Psoas muscle (tissue), 8 donors: ENCODE measurements at regions of chr2 and their contacts with region 1.

Region 1: DNA sequence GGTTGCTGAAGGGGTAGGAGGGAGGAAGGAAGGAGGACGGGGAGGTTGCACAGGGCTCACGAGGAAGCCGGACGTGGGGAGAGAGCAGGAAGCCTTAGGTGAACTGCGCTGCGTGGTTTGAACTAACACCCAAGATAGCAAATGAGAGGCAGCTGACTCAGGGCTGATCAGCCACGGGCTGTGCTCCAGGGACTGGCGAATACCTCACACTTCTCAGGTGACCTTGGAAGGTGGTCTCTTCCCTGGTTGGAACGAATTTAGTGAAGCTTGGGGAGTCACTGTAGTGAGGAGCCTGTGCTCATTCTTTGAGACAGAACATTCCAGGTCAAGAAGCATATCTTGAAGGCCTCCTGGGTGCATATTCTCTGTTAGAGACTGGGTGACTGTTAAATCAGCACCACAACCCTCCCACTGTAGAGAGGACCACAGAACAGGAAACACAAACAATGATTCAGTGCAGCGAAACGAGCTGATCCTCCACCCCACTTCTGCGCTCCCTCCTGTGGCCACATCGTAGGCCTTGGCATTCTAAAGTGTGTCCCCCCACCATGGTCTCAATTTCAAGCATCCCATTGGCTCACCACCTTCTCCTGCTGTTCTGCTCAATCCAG is 33.8 kb downstream of the TOGARAM2 start:
- DNase-seq: peak; percentile 66 to 86
- ATAC-seq: peak in 3 of 4 donors; percentile 27 to 36 (median 34)
- H3K4me3 ChIP-seq: peak overlapping the region; percentile 52
- H3K27ac ChIP-seq: peak overlapping the region; percentile 87
- H3K4me1 ChIP-seq: peaks cover 66% of the 10 kb centered on the region
- H3K27me3 ChIP-seq: no peaks in the 10 kb centered on the region
- CTCF ChIP-seq: no peak

Region 2: DNA sequence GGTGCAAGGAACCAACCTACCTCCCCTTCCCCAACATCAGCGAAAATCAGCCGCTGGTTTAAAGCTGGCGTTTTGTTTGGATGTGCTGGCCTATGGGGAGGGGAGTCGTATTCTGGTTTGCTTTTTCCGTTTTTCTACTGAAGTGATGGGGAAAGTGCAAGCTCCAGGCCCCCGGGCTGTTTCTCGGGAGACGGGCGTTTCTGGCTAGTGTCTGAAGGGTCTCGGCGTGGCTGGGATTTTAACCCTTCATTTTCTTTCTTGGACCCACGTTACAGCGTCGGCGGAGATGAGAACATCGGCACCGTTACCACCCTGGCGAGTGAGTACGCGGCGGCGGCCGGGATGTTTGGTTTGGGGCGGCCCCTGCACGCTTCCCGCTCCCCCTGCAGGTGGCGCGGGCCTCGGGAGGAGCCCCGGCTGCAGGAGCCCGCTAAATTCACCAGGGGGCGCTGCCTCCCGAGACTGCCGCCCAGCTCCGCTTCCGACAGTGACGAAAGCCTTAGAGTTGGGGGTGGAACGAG is 448.3 kb before region 1 on chr2:
- intact Hi-C with region 1: loop called in 1 of 2 experiments (anchors 5 kb)
- DNase-seq: peak; percentile 86 to 92
- ATAC-seq: peak; percentile 87 to 97 (median 90)
- H3K4me3 ChIP-seq: peak overlapping the region; percentile 70
- H3K27ac ChIP-seq: peak overlapping the region; percentile 83
- H3K4me1 ChIP-seq: peaks cover 21% of the 10 kb centered on the region
- H3K27me3 ChIP-seq: no peaks in the 10 kb centered on the region
- CTCF ChIP-seq: peak; percentile 99

Region 3: GRCh38 chr2:28821295-28821958 is 193.5 kb before region 1 on chr2:
- intact Hi-C with region 1: loop called in 1 of 2 experiments (anchors 10 kb)
- DNase-seq: no peak
- ATAC-seq: peak; percentile 64 to 92 (median 88)
- H3K4me3 ChIP-seq: no peak overlapping the region
- H3K27ac ChIP-seq: no peak overlapping the region
- H3K4me1 ChIP-seq: no peaks in the 10 kb centered on the region
- H3K27me3 ChIP-seq: no peaks in the 10 kb centered on the region
- CTCF ChIP-seq: peak; percentile 70

Region 4: DNA sequence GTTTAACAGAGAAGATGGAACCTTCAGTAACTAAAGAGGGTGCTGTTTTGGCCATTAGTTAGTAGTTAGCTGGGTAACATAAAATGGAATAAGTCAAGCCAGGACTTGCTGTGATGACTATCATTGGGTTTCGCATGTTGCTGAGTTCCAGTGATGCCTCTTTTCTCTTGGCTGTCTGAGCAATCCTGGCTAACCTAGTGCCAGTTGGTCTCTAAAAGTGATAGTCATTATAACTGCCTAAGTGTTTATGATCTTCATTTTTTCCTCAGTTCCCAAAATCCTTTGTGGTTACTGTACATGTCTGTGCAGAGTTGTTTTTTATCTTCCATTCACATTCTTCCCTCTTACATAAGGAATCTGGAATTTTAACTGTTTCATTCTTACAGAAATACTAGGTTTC is 87.0 kb before region 1 on chr2:
- intact Hi-C with region 1: no loop called
- DNase-seq: no peak
- ATAC-seq: no peak
- H3K4me3 ChIP-seq: no peak overlapping the region
- H3K27ac ChIP-seq: no peak overlapping the region
- H3K4me1 ChIP-seq: no peaks in the 10 kb centered on the region
- H3K27me3 ChIP-seq: no peaks in the 10 kb centered on the region
- CTCF ChIP-seq: no peak

Region 5: GRCh38 chr2:28958689-28959088 is 56.2 kb before region 1 on chr2:
- intact Hi-C with region 1: loop called (anchors 2 kb)
- DNase-seq: peak; percentile 64 to 87
- ATAC-seq: peak; percentile 88 to 92 (median 89)
- H3K4me3 ChIP-seq: no peak overlapping the region
- H3K27ac ChIP-seq: no peak overlapping the region
- H3K4me1 ChIP-seq: peaks cover 5% of the 10 kb centered on the region
- H3K27me3 ChIP-seq: no peaks in the 10 kb centered on the region
- CTCF ChIP-seq: peak; percentile 68

Region 6: DNA sequence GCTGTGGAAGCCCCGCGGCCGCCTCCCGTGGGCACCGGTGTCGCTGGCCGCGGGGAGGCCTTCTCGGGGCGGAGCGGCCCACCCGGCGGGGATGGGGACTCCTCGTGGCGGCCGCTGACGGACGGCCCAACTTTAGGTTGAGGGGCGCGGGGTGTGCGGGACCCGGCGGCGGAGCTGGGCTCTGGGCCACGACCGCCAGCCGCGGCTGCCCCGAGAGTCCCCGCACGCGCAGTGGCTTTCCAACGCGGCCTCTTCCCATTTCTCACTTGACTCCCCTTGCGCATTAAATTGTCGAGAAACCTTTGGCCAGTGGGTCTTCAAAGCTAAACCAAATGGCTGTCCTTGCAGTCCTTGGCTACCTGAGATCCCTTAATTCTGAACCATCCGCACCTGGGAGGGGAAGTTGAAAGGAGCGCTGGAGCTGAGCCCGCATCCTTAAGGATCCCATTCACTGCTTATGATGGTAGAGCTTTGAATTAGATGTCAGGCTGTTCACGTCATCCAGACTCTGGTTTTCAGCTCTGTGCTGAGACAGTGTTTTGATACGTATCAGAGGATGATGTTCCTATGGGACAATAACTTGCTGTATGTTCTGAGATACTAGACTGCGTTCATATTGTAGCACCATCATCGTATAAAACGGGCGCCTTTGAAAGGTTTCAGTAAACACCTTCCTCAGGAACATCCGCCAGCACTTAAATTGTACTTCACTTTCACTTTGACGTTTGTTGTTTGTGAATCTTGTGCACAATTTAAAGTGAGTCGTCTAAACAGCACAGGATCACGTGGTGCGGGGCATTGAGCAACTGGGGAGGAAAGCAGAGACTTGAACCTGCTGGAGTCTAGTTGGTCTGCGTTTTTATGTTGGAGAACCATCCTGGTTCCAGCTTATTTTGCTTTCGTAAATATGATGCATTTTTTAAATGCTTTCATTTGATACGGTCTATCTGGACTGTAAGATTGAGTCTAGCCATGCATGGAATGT is 101.2 kb after region 1 on chr2:
- intact Hi-C with region 1: loop called (anchors 5 kb)
- DNase-seq: peak; percentile 75 to 79
- ATAC-seq: peak; percentile 28 to 65 (median 34)
- H3K4me3 ChIP-seq: peak overlapping the region; percentile 89
- H3K27ac ChIP-seq: peak overlapping the region; percentile 92
- H3K4me1 ChIP-seq: peaks cover 61% of the 10 kb centered on the region
- H3K27me3 ChIP-seq: no peaks in the 10 kb centered on the region
- CTCF ChIP-seq: no peak

Region 7: GRCh38 chr2:29146197-29146596 is 131.3 kb after region 1 on chr2:
- intact Hi-C with region 1: no loop called
- DNase-seq: no peak
- ATAC-seq: no peak
- H3K4me3 ChIP-seq: no peak overlapping the region
- H3K27ac ChIP-seq: no peak overlapping the region
- H3K4me1 ChIP-seq: no peaks in the 10 kb centered on the region
- H3K27me3 ChIP-seq: no peaks in the 10 kb centered on the region
- CTCF ChIP-seq: no peak

Region 8: DNA sequence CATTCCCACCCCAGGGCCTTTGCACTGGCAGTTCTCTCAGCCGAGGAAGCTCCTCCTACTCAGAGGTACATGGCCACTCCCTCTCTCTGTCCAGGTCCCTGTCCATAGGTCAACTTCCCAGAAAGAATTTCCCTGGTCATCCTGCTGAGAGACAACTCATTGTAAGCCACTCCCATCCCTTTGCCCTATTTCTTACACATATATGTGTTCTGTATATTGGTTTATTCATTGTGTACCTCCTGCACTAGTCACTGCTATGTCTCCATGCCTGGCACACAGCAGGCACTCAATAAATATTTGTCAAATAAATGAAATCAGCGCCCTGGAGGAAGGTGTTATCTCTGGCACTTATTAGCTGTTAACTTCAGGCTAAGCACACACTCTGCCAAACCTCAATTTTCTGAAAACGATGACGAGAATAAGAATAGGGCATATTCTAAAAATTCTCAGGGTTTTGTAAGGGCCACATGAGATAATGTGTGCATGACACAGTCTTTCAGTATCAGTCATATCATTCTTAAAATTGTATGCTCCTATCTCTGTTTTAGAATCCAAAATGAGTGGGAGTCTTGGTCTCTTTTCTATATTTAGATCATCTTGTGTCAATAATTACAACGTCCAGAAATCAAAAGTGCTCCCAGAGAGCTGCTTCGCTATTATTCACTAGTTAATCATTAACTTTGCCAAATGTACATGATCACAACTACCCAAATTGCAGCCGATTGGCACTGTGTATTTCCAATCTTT is 708.5 kb after region 1 on chr2:
- intact Hi-C with region 1: no loop called
- DNase-seq: no peak
- ATAC-seq: no peak
- H3K4me3 ChIP-seq: no peak overlapping the region
- H3K27ac ChIP-seq: no peak overlapping the region
- H3K4me1 ChIP-seq: no peaks in the 10 kb centered on the region
- H3K27me3 ChIP-seq: peaks cover 0 to 6% (median 0%) of the 10 kb centered on the region in 3 donors
- CTCF ChIP-seq: no peak